Activated CD4-positive, alpha-beta memory T cell treated with anti-CD3 and anti-CD28 coated beads for 36 hours (primary cell): ENCODE measurements at regions of chr12 and their contacts with region 1.

Region 1: GRCh38 chr12:3275171-3276041 is 198.2 kb downstream of the TSPAN9 start:
- DNase-seq: peak; percentile 80
- H3K4me3 Mint-ChIP-seq: no peak overlapping the region
- H3K27ac Mint-ChIP-seq: no peak overlapping the region
- H3K4me1 Mint-ChIP-seq: no peaks in the 10 kb centered on the region
- H3K27me3 Mint-ChIP-seq: peaks cover 10% of the 10 kb centered on the region

Region 2: DNA sequence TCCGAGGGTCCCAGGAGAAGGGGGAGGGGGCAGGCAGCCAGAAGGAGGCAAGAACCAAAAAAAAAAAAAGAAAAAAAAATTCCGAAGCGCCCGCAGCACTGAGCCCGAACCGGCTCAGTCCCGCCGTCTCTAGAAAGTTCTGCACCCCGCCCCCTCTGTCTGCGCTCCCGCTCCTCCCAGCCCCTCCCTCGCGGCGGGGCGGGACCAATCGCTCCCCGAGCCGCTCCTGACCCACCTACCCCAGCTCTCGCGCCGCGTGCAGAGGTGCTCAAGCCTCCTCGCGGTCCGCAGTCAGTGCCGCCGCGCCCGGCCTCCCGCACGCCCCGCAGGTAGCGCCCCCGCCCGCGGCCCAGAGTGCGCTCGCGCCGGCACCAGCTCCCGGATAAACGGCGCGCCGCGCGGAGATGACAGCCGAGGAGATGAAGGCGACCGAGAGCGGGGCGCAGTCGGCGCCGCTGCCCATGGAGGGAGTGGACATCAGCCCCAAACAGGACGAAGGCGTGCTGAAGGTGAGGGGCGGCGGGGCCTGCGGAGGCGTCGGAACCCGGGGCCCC is 480.6 kb before region 1 on chr12 and contains the start of gene FKBP4:
- CTCF ChIA-PET with region 1: no interaction called
- POLR2A ChIA-PET with region 1: no interaction called
- intact Hi-C with region 1: no loop called
- DNase-seq: peak; percentile 93
- H3K4me3 Mint-ChIP-seq: peak within 1 kb of the TSS; percentile 91
- H3K27ac Mint-ChIP-seq: peak within 1 kb of the TSS; percentile 23
- H3K4me1 Mint-ChIP-seq: peaks cover 22% of the 10 kb centered on the region
- H3K27me3 Mint-ChIP-seq: no peaks in the 10 kb centered on the region
- total RNA-seq, gene FKBP4: 144 to 153 TPM

Region 3: GRCh38 chr12:3073438-3074250 is 201.8 kb before region 1 on chr12:
- CTCF ChIA-PET with region 1: interaction called, 52 read pairs
- POLR2A ChIA-PET with region 1: no interaction called
- intact Hi-C with region 1: loop called (anchors 1 kb)
- DNase-seq: peak; percentile 89
- H3K4me3 Mint-ChIP-seq: no peak overlapping the region
- H3K27ac Mint-ChIP-seq: no peak overlapping the region
- H3K4me1 Mint-ChIP-seq: peaks cover 4% of the 10 kb centered on the region
- H3K27me3 Mint-ChIP-seq: peaks cover 9% of the 10 kb centered on the region

Region 4: DNA sequence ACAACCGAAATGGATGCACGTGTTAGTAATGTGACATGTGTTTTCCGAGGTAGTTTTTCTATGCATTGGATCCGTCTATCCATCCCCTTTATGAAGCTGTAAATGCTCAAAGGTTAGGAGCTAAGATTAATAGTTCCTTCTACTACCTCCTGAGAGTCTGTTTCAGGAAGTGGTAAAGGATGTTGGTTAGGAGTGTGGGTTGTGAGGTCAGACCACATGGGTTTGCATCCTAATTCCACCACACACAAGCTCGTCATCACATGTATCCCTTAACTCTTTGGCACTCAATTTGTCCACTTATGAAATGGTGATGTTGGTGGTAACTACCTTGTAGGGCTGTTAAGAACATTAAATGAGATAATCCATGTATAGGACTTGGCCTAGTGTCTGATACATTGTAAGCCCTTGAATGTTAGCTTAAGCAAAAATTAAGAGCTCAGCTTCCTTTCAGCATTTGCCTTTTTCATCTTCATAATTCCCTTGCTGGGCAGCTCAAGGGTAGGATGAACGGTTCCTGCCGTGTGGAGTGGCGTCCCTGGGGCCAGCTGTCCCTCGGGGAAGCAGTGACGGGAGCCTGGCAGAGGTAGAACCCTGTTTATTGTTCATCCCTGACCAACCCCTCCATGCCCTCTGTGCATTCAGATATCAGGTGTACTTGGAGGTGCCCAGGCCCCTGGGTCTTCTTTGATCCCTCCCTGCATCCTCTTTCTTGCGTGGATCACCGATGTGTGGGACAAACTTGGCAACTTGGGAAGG is 145.9 kb before region 1 on chr12:
- CTCF ChIA-PET with region 1: interaction called, 93 read pairs
- POLR2A ChIA-PET with region 1: interaction called, 3 read pairs
- intact Hi-C with region 1: no loop called
- DNase-seq: peak; percentile 48
- H3K4me3 Mint-ChIP-seq: no peak overlapping the region
- H3K27ac Mint-ChIP-seq: no peak overlapping the region
- H3K4me1 Mint-ChIP-seq: peaks cover 18% of the 10 kb centered on the region
- H3K27me3 Mint-ChIP-seq: peaks cover 45% of the 10 kb centered on the region

Region 5: GRCh38 chr12:3135522-3136461 is 139.6 kb before region 1 on chr12:
- CTCF ChIA-PET with region 1: interaction called, 93 read pairs
- POLR2A ChIA-PET with region 1: interaction called, 3 read pairs
- intact Hi-C with region 1: loop called (anchors 1 kb)
- DNase-seq: peak; percentile 44
- H3K4me3 Mint-ChIP-seq: no peak overlapping the region
- H3K27ac Mint-ChIP-seq: no peak overlapping the region
- H3K4me1 Mint-ChIP-seq: no peaks in the 10 kb centered on the region
- H3K27me3 Mint-ChIP-seq: peaks cover 34% of the 10 kb centered on the region

Region 6: GRCh38 chr12:3202734-3203446 is 72.5 kb before region 1 on chr12:
- CTCF ChIA-PET with region 1: interaction called, 12 read pairs
- POLR2A ChIA-PET with region 1: no interaction called
- intact Hi-C with region 1: no loop called
- DNase-seq: peak; percentile 74
- H3K4me3 Mint-ChIP-seq: no peak overlapping the region
- H3K27ac Mint-ChIP-seq: no peak overlapping the region
- H3K4me1 Mint-ChIP-seq: peaks cover 9% of the 10 kb centered on the region
- H3K27me3 Mint-ChIP-seq: peaks cover 34% of the 10 kb centered on the region

Region 7: DNA sequence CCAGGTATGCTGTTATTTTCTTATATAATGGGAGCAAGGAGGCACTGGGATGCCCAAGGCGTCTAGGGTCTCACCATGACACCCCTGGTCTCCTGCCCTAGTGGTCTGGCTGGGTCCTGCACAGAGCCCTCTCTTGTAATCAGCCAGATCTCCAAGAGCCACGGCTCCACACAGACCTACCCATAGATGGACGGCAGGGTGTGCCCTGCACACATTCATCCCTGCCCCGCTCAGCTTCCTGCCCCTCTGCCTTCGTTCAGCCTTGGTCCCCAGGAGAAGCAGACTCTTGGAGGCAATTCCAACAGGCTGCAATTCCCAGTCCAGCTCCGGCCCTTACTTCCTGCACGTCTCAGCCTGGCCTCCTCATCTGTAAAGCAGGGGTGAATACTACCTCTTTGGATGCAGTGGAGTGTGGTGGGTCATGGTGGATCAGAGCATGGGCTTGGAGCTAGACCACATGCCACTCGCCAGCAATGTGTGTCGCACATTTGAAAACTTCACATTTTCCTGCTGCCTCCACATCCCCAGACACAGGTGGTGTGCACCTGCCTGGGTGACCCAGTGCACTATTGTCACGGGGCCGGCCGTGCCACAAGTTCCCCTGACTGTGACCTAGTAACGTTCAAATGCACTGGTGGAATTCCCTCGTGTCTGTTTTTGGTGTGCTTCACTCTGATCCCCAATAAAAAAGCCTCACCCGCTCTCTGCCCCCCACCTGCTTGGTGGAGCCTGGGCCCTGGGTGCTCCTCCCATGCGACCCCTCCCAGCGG is 44.5 kb after region 1 on chr12:
- CTCF ChIA-PET with region 1: no interaction called
- POLR2A ChIA-PET with region 1: no interaction called
- intact Hi-C with region 1: no loop called
- DNase-seq: no peak
- H3K4me3 Mint-ChIP-seq: no peak overlapping the region
- H3K27ac Mint-ChIP-seq: no peak overlapping the region
- H3K4me1 Mint-ChIP-seq: no peaks in the 10 kb centered on the region
- H3K27me3 Mint-ChIP-seq: peaks cover 7% of the 10 kb centered on the region

Region 8: GRCh38 chr12:3335078-3335487 is 59.7 kb after region 1 on chr12:
- CTCF ChIA-PET with region 1: no interaction called
- POLR2A ChIA-PET with region 1: no interaction called
- intact Hi-C with region 1: no loop called
- DNase-seq: no peak
- H3K4me3 Mint-ChIP-seq: no peak overlapping the region
- H3K27ac Mint-ChIP-seq: no peak overlapping the region
- H3K4me1 Mint-ChIP-seq: no peaks in the 10 kb centered on the region
- H3K27me3 Mint-ChIP-seq: peaks cover 16% of the 10 kb centered on the region

Region 9: GRCh38 chr12:3350422-3350821 is 75.0 kb after region 1 on chr12:
- CTCF ChIA-PET with region 1: no interaction called
- POLR2A ChIA-PET with region 1: no interaction called
- intact Hi-C with region 1: no loop called
- DNase-seq: no peak
- H3K4me3 Mint-ChIP-seq: no peak overlapping the region
- H3K27ac Mint-ChIP-seq: no peak overlapping the region
- H3K4me1 Mint-ChIP-seq: no peaks in the 10 kb centered on the region
- H3K27me3 Mint-ChIP-seq: no peaks in the 10 kb centered on the region